ENCODE measurements at regions of chr7 and their contacts with region 1.

Region 1: GRCh38 chr7:44847508-44847920 is 373 bp downstream of the H2AZ2 start:
- DNase-seq: peak in 8 of 9 donors; percentile 84 to 94 (median 91)
- ATAC-seq: peak; percentile 68
- H3K4me3 ChIP-seq: peak overlapping the region; percentile 91
- H3K4me3 Mint-ChIP-seq: peak overlapping the region; percentile 89 to 99 (median 94)
- H3K27ac ChIP-seq: peak overlapping the region; percentile 96
- H3K27ac Mint-ChIP-seq: peak overlapping the region; percentile 95 to 100 (median 98)
- H3K4me1 ChIP-seq: peaks cover 0 to 11% of the 10 kb centered on the region in 2 donors
- H3K4me1 Mint-ChIP-seq: peaks cover 21 to 58% (median 33%) of the 10 kb centered on the region in 7 donors
- H3K27me3 ChIP-seq: no peaks in the 10 kb centered on the region
- H3K27me3 Mint-ChIP-seq: peaks cover 0 to 2% (median 0%) of the 10 kb centered on the region in 5 donors

Region 2: GRCh38 chr7:43925984-43926797 is 921.3 kb before region 1 on chr7 and contains the start of gene UBE2D4:
- CTCF ChIA-PET with region 1: no interaction called
- POLR2A ChIA-PET with region 1: no interaction called
- intact Hi-C with region 1: loop called in 1 of 2 experiments (anchors 2 kb)
- DNase-seq: peak; percentile 83 to 93 (median 91)
- ATAC-seq: peak; percentile 93
- H3K4me3 ChIP-seq: peak within 1 kb of the TSS; percentile 73
- H3K4me3 Mint-ChIP-seq: peak within 1 kb of the TSS; percentile 90 to 95 (median 93)
- H3K27ac ChIP-seq: peak within 1 kb of the TSS; percentile 94
- H3K27ac Mint-ChIP-seq: peak within 1 kb of the TSS; percentile 92 to 98 (median 96)
- H3K4me1 ChIP-seq: peaks cover 6 to 16% of the 10 kb centered on the region in 2 donors
- H3K4me1 Mint-ChIP-seq: peaks cover 20 to 58% (median 40%) of the 10 kb centered on the region in 7 donors
- H3K27me3 ChIP-seq: no peaks in the 10 kb centered on the region
- H3K27me3 Mint-ChIP-seq: no peaks in the 10 kb centered on the region
- total RNA-seq, gene UBE2D4: 6.3 to 13.9 (median 9.6) TPM

Region 3: GRCh38 chr7:44200647-44201461 is 646.7 kb before region 1 on chr7 and contains the start of gene YKT6:
- CTCF ChIA-PET with region 1: no interaction called
- POLR2A ChIA-PET with region 1: no interaction called
- intact Hi-C with region 1: loop called in 1 of 2 experiments (anchors 2 kb)
- DNase-seq: peak; percentile 73 to 94 (median 93)
- ATAC-seq: peak; percentile 99
- H3K4me3 ChIP-seq: peak within 1 kb of the TSS; percentile 95
- H3K4me3 Mint-ChIP-seq: peak within 1 kb of the TSS; percentile 81 to 90 (median 85)
- H3K27ac ChIP-seq: peak within 1 kb of the TSS; percentile 91
- H3K27ac Mint-ChIP-seq: peak within 1 kb of the TSS; percentile 19 to 88 (median 63)
- H3K4me1 ChIP-seq: peaks cover 15 to 16% of the 10 kb centered on the region in 2 donors
- H3K4me1 Mint-ChIP-seq: peaks cover 24 to 38% (median 32%) of the 10 kb centered on the region in 7 donors
- H3K27me3 ChIP-seq: no peaks in the 10 kb centered on the region
- H3K27me3 Mint-ChIP-seq: peaks cover 0 to 7% (median 3%) of the 10 kb centered on the region in 5 donors
- total RNA-seq, gene YKT6: 58.1 to 80.9 (median 62.3) TPM

Region 4: DNA sequence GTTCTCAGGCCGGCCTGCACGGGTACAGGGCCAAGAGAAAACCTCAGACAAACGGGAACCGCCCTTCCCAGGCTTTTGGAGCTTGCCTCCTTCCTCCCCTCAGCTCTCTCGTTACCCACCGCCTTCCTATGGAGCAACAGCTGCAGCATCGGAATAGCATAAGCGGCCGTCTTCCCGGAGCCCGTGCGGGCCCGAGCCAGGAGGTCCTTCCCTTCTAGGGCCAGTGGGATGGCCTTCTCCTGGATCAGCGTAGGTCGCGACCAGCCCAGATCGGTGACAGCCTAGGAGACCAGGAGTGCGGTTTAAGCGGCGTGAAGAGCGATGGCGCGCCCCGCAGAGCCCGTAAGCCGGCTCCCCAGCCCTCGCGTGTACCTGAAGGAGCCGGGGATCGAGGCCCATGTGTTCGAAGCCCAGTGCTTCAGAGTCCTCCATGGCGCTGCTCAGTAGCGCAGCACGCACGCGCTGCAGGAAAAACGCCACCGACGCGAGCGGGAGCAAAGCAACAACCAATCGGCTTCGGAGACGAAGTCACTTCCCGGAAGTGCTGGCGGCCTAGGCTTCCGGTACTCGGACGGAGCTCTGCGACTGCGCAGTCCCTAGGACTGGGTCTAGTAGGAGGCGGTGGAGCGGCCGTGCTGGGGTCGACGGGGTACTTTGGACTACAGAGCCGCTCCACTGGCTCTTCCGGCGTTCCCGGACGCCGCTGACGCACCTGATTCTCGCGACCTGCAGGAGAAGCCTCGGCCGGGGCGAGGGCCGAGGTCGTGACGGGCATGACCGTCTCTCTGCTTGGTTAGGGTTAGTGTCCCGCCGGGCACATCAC is 273.8 kb before region 1 on chr7 and contains the start of gene DDX56:
- CTCF ChIA-PET with region 1: interaction called, 3 read pairs
- POLR2A ChIA-PET with region 1: interaction called, 23 read pairs
- intact Hi-C with region 1: no loop called
- DNase-seq: peak; percentile 72 to 90 (median 87)
- ATAC-seq: peak; percentile 97
- H3K4me3 ChIP-seq: peak within 1 kb of the TSS; percentile 95
- H3K4me3 Mint-ChIP-seq: peak within 1 kb of the TSS; percentile 91 to 98 (median 95)
- H3K27ac ChIP-seq: peak within 1 kb of the TSS; percentile 95
- H3K27ac Mint-ChIP-seq: peak within 1 kb of the TSS; percentile 92 to 99 (median 98)
- H3K4me1 ChIP-seq: peaks cover 19 to 27% of the 10 kb centered on the region in 2 donors
- H3K4me1 Mint-ChIP-seq: peaks cover 20 to 48% (median 33%) of the 10 kb centered on the region in 7 donors
- H3K27me3 ChIP-seq: no peaks in the 10 kb centered on the region
- H3K27me3 Mint-ChIP-seq: no peaks in the 10 kb centered on the region
- total RNA-seq, gene DDX56: 82.8 to 124 (median 100.0) TPM

Region 5: GRCh38 chr7:44638611-44639557 is 208.6 kb before region 1 on chr7:
- CTCF ChIA-PET with region 1: no interaction called
- POLR2A ChIA-PET with region 1: interaction called, 3 read pairs
- intact Hi-C with region 1: loop called (anchors 1 kb)
- DNase-seq: peak; percentile 15 to 81 (median 40)
- ATAC-seq: peak; percentile 83
- H3K4me3 ChIP-seq: peak overlapping the region; percentile 28
- H3K4me3 Mint-ChIP-seq: peak overlapping the region; percentile 57 to 95 (median 78)
- H3K27ac ChIP-seq: peak overlapping the region; percentile 79
- H3K27ac Mint-ChIP-seq: peak overlapping the region; percentile 92 to 100 (median 98)
- H3K4me1 ChIP-seq: peaks cover 37 to 77% of the 10 kb centered on the region in 2 donors
- H3K4me1 Mint-ChIP-seq: peaks cover 46 to 80% (median 57%) of the 10 kb centered on the region in 7 donors
- H3K27me3 ChIP-seq: no peaks in the 10 kb centered on the region
- H3K27me3 Mint-ChIP-seq: no peaks in the 10 kb centered on the region

Region 6: GRCh38 chr7:44814919-44815318 is 32.6 kb before region 1 on chr7:
- CTCF ChIA-PET with region 1: no interaction called
- POLR2A ChIA-PET with region 1: no interaction called
- intact Hi-C with region 1: no loop called
- DNase-seq: no peak
- ATAC-seq: no peak
- H3K4me3 ChIP-seq: no peak overlapping the region
- H3K4me3 Mint-ChIP-seq: no peak overlapping the region
- H3K27ac ChIP-seq: no peak overlapping the region
- H3K27ac Mint-ChIP-seq: no peak overlapping the region
- H3K4me1 ChIP-seq: no peaks in the 10 kb centered on the region
- H3K4me1 Mint-ChIP-seq: no peaks in the 10 kb centered on the region
- H3K27me3 ChIP-seq: no peaks in the 10 kb centered on the region
- H3K27me3 Mint-ChIP-seq: no peaks in the 10 kb centered on the region

Region 7: GRCh38 chr7:44858161-44858560 is 10.6 kb after region 1 on chr7:
- CTCF ChIA-PET with region 1: interaction called, 7 read pairs
- POLR2A ChIA-PET with region 1: interaction called, 16 read pairs
- intact Hi-C with region 1: loop called (anchors 1 kb)
- DNase-seq: no peak
- ATAC-seq: no peak
- H3K4me3 ChIP-seq: no peak overlapping the region
- H3K4me3 Mint-ChIP-seq: no peak overlapping the region
- H3K27ac ChIP-seq: no peak overlapping the region
- H3K27ac Mint-ChIP-seq: peak overlapping the region in 1 of 9 donors; percentile 9
- H3K4me1 ChIP-seq: peaks cover 0 to 4% of the 10 kb centered on the region in 2 donors
- H3K4me1 Mint-ChIP-seq: peaks cover 0 to 21% (median 5%) of the 10 kb centered on the region in 7 donors
- H3K27me3 ChIP-seq: no peaks in the 10 kb centered on the region
- H3K27me3 Mint-ChIP-seq: peaks cover 0 to 6% (median 0%) of the 10 kb centered on the region in 5 donors

Region 8: GRCh38 chr7:44999245-45000095 is 152.0 kb after region 1 on chr7:
- CTCF ChIA-PET with region 1: no interaction called
- POLR2A ChIA-PET with region 1: interaction called, 5 read pairs
- intact Hi-C with region 1: loop called (anchors 1 kb)
- DNase-seq: peak; percentile 92 to 99 (median 98)
- ATAC-seq: peak; percentile 93
- H3K4me3 ChIP-seq: peak overlapping the region; percentile 83
- H3K4me3 Mint-ChIP-seq: peak overlapping the region; percentile 85 to 100 (median 96)
- H3K27ac ChIP-seq: peak overlapping the region; percentile 80
- H3K27ac Mint-ChIP-seq: peak overlapping the region; percentile 82 to 99 (median 96)
- H3K4me1 ChIP-seq: peaks cover 18 to 34% of the 10 kb centered on the region in 2 donors
- H3K4me1 Mint-ChIP-seq: peaks cover 19 to 59% (median 49%) of the 10 kb centered on the region in 7 donors
- H3K27me3 ChIP-seq: no peaks in the 10 kb centered on the region
- H3K27me3 Mint-ChIP-seq: no peaks in the 10 kb centered on the region

Region 9: GRCh38 chr7:45020915-45021314 is 173.4 kb after region 1 on chr7:
- CTCF ChIA-PET with region 1: no interaction called
- POLR2A ChIA-PET with region 1: no interaction called
- intact Hi-C with region 1: no loop called
- DNase-seq: no peak
- ATAC-seq: no peak
- H3K4me3 ChIP-seq: no peak overlapping the region
- H3K4me3 Mint-ChIP-seq: peak overlapping the region in 2 of 10 donors; percentile 24 to 41
- H3K27ac ChIP-seq: no peak overlapping the region
- H3K27ac Mint-ChIP-seq: peak overlapping the region in 7 of 9 donors; percentile 28 to 88 (median 46)
- H3K4me1 ChIP-seq: peaks cover 7 to 16% of the 10 kb centered on the region in 2 donors
- H3K4me1 Mint-ChIP-seq: peaks cover 30 to 70% (median 61%) of the 10 kb centered on the region in 7 donors
- H3K27me3 ChIP-seq: no peaks in the 10 kb centered on the region
- H3K27me3 Mint-ChIP-seq: no peaks in the 10 kb centered on the region

Region 10: DNA sequence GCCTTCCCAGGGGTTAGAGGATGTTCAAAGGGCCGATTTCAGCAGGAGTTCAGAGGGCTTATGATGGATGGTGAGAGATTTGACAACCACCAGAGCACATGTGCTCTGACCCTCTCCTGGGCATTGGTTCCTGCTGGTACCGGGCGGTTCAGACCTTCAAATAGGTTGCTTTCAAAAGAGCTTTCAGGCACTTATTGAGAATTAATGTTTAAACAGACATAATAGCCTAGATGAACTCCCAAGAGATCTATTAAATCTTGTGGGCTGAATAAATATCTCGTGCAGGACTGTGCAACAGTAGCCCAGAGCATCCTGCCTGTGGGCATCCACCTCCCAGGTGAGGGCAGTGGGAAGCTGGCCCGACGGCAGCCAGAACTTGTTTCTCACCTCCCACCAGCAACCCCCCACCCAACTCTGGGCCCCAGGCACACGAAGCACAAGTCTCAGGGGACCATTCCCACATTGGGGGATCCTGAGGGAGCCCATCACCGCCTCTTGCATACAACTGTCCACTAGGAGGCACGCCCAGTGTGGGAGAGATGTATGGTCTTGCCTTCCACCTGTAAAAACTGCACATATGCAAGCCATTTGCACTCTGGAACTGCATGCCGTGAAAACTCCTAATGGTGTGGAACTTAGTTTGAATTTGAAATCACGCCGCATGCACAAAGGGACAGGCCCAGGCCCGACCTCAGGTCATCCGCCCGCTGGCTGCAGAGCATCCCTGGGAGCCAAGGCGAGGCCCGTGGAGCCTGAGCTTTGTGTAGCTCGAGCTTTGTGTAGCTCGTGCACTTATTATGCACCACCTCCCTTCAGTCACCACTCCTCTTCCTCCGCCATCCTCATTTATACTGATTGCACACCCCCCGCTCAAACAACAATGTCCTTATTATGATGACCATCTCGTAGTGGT is 874.4 kb after region 1 on chr7:
- CTCF ChIA-PET with region 1: no interaction called
- POLR2A ChIA-PET with region 1: no interaction called
- intact Hi-C with region 1: no loop called
- DNase-seq: no peak
- ATAC-seq: no peak
- H3K4me3 ChIP-seq: no peak overlapping the region
- H3K4me3 Mint-ChIP-seq: no peak overlapping the region
- H3K27ac ChIP-seq: no peak overlapping the region
- H3K27ac Mint-ChIP-seq: peak overlapping the region in 3 of 9 donors; percentile 8 to 84 (median 19)
- H3K4me1 ChIP-seq: no peaks in the 10 kb centered on the region
- H3K4me1 Mint-ChIP-seq: peaks cover 0 to 3% (median 0%) of the 10 kb centered on the region in 7 donors
- H3K27me3 ChIP-seq: no peaks in the 10 kb centered on the region
- H3K27me3 Mint-ChIP-seq: no peaks in the 10 kb centered on the region

Measured in naive thymus-derived CD4-positive, alpha-beta T cell (primary cell).